Posterior vena cava (tissue), 2 donors: ENCODE measurements at regions of chr1 and their contacts with region 1.

Region 1: GRCh38 chr1:46173361-46173856 is 1.5 kb upstream of the TSPAN1 start:
- DNase-seq: no peak

Region 2: DNA sequence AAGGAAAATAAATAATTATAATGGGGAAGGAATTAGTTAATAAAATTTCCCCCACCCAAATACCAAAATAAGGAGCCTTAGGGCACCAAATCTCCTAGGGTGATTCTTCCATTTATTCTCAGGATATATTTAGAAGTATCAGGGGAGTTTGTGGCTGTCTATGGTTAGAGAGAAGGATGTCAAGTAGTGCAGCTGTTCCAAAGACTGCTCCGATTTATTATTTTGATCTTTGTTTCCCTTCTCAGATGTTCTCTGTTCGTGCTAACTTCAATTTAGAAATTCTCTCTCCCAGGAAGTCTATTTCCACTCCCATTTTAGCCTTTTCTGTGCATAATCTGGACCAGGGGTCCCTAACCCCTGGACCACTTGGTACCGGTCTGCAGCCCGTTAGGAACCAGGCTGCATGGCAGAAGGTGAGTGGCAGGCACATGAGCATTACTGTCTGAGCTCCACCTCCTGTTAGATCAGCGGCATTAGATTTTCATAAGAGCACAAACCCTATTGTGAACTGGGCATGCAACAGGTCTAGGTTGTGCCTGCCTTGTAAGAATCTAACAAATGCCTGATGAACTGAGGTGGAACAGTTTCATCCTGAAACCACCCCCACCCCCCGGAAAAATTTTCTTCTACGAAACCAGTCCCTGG is 379.3 kb before region 1 on chr1:
- intact Hi-C with region 1: no loop called
- DNase-seq: no peak

Region 3: GRCh38 chr1:46132529-46133180 is 40.8 kb before region 1 on chr1 and contains the start of gene PIK3R3:
- intact Hi-C with region 1: loop called in 1 of 2 experiments (anchors 5 kb)
- DNase-seq: peak; percentile 99
- total RNA-seq, gene PIK3R3: 26.0 to 39.7 TPM